ENCODE measurements at regions of chr17 and their contacts with region 1.

Region 1: GRCh38 chr17:31487648-31488263 is 96.3 kb downstream of the RAB11FIP4 start:
- DNase-seq: peak; percentile 95
- ATAC-seq: peak; percentile 93
- H3K4me3 Mint-ChIP-seq: peak overlapping the region; percentile 92
- H3K27ac Mint-ChIP-seq: peak overlapping the region; percentile 44
- H3K4me1 Mint-ChIP-seq: peaks cover 49% of the 10 kb centered on the region
- H3K27me3 Mint-ChIP-seq: no peaks in the 10 kb centered on the region
- CTCF ChIP-seq: no peak

Region 2: GRCh38 chr17:31453896-31454295 is 33.9 kb before region 1 on chr17:
- CTCF ChIA-PET with region 1: no interaction called
- POLR2A ChIA-PET with region 1: no interaction called
- intact Hi-C with region 1: no loop called
- DNase-seq: no peak
- ATAC-seq: no peak
- H3K4me3 Mint-ChIP-seq: no peak overlapping the region
- H3K27ac Mint-ChIP-seq: no peak overlapping the region
- H3K4me1 Mint-ChIP-seq: no peaks in the 10 kb centered on the region
- H3K27me3 Mint-ChIP-seq: no peaks in the 10 kb centered on the region
- CTCF ChIP-seq: no peak

Region 3: GRCh38 chr17:31499771-31500554 is 12.2 kb after region 1 on chr17:
- CTCF ChIA-PET with region 1: interaction called, 3 read pairs
- POLR2A ChIA-PET with region 1: interaction called, 16 read pairs
- intact Hi-C with region 1: no loop called
- DNase-seq: peak; percentile 81
- ATAC-seq: peak; percentile 72
- H3K4me3 Mint-ChIP-seq: peak overlapping the region; percentile 24
- H3K27ac Mint-ChIP-seq: peak overlapping the region; percentile 32
- H3K4me1 Mint-ChIP-seq: peaks cover 70% of the 10 kb centered on the region
- H3K27me3 Mint-ChIP-seq: no peaks in the 10 kb centered on the region
- CTCF ChIP-seq: no peak

Region 4: DNA sequence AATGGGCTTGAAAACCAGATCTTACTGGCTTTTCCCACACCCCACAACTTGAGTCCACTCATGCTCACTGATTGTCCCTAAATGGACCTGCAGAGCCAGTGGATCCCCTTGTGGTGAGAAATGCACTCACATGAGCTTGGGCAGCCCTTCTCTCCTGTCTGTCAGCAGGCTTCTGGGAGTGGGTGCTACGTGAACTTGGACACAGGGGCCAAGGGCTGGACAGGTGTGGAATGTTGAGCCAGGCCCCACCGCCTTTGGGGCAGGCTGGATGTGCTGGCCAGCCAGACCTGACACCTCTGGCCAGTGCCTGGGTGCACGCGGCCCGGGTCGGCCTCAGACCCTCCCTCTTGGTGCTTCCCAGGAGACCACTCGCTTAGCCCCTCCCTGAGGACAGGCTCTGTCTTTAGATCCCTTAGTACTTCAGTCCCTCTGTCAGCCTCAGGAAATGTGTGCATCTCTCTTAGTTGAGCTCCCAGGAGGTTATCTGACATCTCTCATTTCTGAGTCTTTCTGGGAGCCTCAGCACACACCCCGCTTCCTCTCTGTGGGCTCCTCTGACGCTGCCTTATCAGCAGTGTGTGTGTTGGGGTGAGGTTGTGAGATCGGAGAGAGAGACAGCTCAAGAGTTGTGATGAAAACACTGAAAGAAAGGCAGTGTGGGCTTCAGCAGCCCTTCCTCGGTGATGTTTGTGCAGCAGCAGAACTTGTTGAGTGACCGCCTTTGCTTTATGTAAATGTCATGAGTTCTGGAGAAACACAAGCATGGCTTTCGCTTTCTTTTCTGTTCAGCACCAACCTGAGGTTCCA is 20.7 kb after region 1 on chr17:
- CTCF ChIA-PET with region 1: interaction called, 79 read pairs
- POLR2A ChIA-PET with region 1: interaction called, 175 read pairs
- intact Hi-C with region 1: no loop called
- DNase-seq: peak; percentile 81
- ATAC-seq: peak; percentile 82
- H3K4me3 Mint-ChIP-seq: peak overlapping the region; percentile 76
- H3K27ac Mint-ChIP-seq: peak overlapping the region; percentile 98
- H3K4me1 Mint-ChIP-seq: peaks cover 62% of the 10 kb centered on the region
- H3K27me3 Mint-ChIP-seq: no peaks in the 10 kb centered on the region
- CTCF ChIP-seq: peak; percentile 72

Measured in activated CD8-positive, alpha-beta T cell treated with anti-CD3 and anti-CD28 coated beads for 36 hours (primary cell).